ENCODE measurements at regions of chr11 and their contacts with region 1.

Region 1: DNA sequence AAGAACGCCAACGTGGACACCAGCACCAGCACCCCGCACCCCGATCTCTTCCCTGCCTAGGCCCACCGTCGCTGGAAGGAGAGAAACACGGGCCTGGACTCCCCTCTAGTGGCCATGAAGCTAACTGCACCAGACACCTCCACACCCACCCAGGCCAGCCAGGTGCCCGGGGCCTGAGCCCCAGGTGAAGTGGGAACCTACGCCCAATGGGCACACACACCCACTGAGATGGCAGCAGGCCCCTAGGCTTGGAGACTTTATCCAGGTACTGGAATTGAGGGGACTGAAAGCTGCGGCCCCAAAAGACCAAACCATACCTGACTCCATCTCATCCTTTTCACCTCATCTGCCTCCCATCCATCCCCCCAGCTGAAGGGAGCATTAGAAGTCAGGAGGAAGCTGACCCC is 81.0 kb downstream of the BUD13 start:
- DNase-seq: peak in 1 of 2 donors; percentile 25
- ATAC-seq: peak in 6 of 8 donors; percentile 48 to 72 (median 68)
- H3K4me3 ChIP-seq: no peak overlapping the region
- H3K27ac ChIP-seq: no peak overlapping the region
- H3K4me1 ChIP-seq: no peaks in the 10 kb centered on the region
- H3K27me3 ChIP-seq: peaks cover 0 to 32% (median 16%) of the 10 kb centered on the region in 7 donors
- CTCF ChIP-seq: peak; percentile 69 to 83 (median 79)

Region 2: DNA sequence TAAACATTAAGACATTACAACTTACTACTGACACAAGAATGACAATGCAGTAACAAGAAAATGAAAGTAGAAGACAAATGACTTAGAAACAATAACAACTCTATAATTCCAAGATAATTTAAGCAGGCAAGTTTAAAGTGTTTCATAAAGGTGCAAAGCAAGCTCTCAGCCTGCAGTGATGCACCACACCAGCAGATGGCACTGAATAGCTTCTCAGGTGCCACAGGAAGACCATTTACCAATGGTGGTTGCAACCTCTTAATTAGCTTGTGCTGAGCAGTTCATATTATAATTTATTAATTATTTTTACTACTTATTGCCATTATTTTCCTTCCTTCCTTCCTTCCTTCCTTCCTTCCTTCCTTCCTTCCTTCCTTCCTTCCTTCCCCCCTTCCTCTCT is 1952.8 kb before region 1 on chr11:
- intact Hi-C with region 1: loop called in 1 of 10 experiments (anchors 10 kb)
- DNase-seq: peak in 1 of 2 donors; percentile 16
- ATAC-seq: no peak
- H3K4me3 ChIP-seq: no peak overlapping the region
- H3K27ac ChIP-seq: no peak overlapping the region
- H3K4me1 ChIP-seq: no peaks in the 10 kb centered on the region
- H3K27me3 ChIP-seq: no peaks in the 10 kb centered on the region
- CTCF ChIP-seq: peak; percentile 43 to 78 (median 65)

Region 3: DNA sequence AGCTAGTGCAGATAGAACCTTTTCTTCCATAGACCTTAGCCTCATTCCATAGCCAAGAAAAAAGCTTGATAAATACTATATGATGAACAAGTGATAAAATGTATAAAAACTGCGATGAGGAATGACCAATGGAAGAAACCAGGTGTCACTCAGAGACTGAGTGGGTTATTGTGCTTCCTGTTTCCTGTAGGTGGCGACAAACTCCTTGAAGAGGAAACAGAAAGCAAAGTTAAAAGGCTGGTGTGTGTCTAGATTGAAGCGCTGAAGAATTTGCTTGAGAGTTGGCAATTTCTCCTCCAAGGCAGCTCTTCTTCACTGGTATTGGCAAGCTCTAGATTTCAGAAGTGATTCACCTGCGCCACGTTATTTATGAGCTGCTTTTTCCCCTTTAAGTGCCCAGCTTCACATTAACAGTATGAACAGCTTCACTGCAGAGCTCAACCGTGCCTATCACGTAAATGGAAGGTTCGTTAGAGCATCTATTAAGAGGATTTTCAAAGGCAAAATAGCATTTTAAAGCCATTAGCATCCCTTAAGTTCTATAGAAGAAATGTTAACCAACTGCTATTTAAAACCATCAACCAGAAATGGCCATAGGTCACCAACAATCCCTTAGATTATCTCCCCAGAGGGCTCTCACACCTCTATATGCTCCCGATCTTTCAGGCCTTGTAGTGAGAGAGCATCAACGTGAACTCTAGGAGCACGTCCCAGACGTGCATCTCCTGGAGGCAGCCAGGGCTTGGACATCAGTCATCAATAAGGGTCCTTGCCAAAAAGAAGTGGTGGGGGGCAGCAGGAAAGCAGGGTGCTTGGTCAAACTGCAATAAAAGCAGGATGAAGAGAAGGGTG is 1367.0 kb before region 1 on chr11:
- intact Hi-C with region 1: loop called in 4 of 10 experiments (anchors 10 kb)
- DNase-seq: peak in 1 of 2 donors; percentile 16
- ATAC-seq: peak; percentile 49 to 91 (median 71)
- H3K4me3 ChIP-seq: peak overlapping the region in 2 of 10 donors; percentile 17 to 22
- H3K27ac ChIP-seq: no peak overlapping the region
- H3K4me1 ChIP-seq: peaks cover 0 to 6% (median 0%) of the 10 kb centered on the region in 9 donors
- H3K27me3 ChIP-seq: no peaks in the 10 kb centered on the region
- CTCF ChIP-seq: peak; percentile 64 to 88 (median 78)

Region 4: DNA sequence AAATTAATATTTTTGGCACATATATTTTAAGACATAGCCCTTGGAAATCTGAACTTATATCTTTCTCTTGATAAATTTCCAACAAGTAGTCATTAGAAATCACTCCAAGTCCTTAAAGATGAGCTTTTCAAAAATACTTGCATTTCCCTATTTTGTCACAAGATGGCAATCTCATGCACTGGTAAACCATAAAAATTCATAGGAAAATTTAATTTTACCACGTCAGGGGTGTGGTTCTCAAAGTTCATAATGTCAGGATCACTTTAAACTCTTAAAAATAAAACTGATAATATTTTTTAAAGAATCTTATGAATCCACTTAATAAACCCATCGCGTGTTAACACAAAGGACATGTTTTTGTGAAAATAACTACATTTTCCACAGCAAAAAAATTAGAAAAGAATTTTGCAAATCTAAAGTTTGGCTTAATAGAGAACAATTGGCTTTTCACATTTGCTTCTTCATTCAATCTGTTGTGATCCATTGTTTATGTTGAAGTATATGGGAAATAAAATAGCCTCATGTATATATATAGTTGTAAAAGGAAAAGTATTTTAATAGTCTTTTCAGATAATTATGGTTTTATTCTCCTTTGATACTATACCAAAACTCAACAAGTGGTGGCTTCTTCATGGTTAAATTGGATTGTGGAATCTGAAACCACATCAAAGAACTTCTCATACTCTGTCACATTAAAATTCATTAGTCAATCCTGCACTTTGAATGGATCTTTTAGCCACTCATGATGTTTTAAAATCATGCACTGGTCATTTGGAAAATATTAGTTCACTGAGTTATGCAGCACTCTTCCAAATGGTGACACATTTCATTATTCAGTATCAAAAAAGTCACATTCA is 1356.6 kb before region 1 on chr11:
- intact Hi-C with region 1: loop called in 1 of 10 experiments (anchors 10 kb)
- DNase-seq: no peak
- ATAC-seq: no peak
- H3K4me3 ChIP-seq: no peak overlapping the region
- H3K27ac ChIP-seq: no peak overlapping the region
- H3K4me1 ChIP-seq: peaks cover 0 to 6% (median 0%) of the 10 kb centered on the region in 9 donors
- H3K27me3 ChIP-seq: no peaks in the 10 kb centered on the region
- CTCF ChIP-seq: peak; percentile 52 to 81 (median 76)

Region 5: GRCh38 chr11:116454020-116454645 is 237.6 kb before region 1 on chr11:
- intact Hi-C with region 1: loop called in 5 of 10 experiments (anchors 2 to 5 kb)
- DNase-seq: peak in 1 of 2 donors; percentile 25
- ATAC-seq: peak in 5 of 8 donors; percentile 8 to 63 (median 42)
- H3K4me3 ChIP-seq: no peak overlapping the region
- H3K27ac ChIP-seq: no peak overlapping the region
- H3K4me1 ChIP-seq: peaks cover 0 to 2% (median 0%) of the 10 kb centered on the region in 9 donors
- H3K27me3 ChIP-seq: peaks cover 0 to 10% (median 0%) of the 10 kb centered on the region in 7 donors
- CTCF ChIP-seq: peak; percentile 33 to 68 (median 57)

Measured in heart right ventricle (tissue), 16 donors.